Activated naive CD4-positive, alpha-beta T cell treated with anti-CD3 and anti-CD28 coated beads for 36 hours (primary cell): ENCODE measurements at regions of chr2 and their contacts with region 1.

Region 1: DNA sequence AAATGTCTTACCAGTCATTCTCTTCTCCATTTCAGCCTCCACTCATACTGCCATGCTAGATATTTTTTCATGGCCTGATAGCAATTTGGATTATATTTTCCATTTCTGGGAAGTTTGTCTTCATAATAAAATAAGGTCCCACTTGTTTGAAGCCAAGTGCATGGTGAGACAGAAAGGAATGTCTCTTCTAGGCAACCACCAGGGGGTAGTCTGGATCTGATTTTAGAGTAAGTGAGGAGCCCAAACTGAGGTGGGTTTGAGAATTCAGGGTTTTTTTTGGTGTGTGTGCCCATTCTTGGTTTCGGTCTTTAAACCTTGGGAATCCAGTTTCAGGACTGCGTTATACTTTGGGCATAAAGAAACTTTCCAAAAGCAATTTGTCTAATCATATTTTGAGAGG is 315.5 kb downstream of the RPRM start:
- DNase-seq: no peak
- H3K4me3 Mint-ChIP-seq: no peak overlapping the region
- H3K27ac Mint-ChIP-seq: no peak overlapping the region
- H3K4me1 Mint-ChIP-seq: no peaks in the 10 kb centered on the region
- H3K27me3 Mint-ChIP-seq: peaks cover 3% of the 10 kb centered on the region

Region 2: GRCh38 chr2:153043385-153043784 is 119.7 kb before region 1 on chr2:
- CTCF ChIA-PET with region 1: no interaction called
- intact Hi-C with region 1: no loop called
- DNase-seq: no peak
- H3K4me3 Mint-ChIP-seq: no peak overlapping the region
- H3K27ac Mint-ChIP-seq: no peak overlapping the region
- H3K4me1 Mint-ChIP-seq: no peaks in the 10 kb centered on the region
- H3K27me3 Mint-ChIP-seq: peaks cover 3% of the 10 kb centered on the region

Region 3: DNA sequence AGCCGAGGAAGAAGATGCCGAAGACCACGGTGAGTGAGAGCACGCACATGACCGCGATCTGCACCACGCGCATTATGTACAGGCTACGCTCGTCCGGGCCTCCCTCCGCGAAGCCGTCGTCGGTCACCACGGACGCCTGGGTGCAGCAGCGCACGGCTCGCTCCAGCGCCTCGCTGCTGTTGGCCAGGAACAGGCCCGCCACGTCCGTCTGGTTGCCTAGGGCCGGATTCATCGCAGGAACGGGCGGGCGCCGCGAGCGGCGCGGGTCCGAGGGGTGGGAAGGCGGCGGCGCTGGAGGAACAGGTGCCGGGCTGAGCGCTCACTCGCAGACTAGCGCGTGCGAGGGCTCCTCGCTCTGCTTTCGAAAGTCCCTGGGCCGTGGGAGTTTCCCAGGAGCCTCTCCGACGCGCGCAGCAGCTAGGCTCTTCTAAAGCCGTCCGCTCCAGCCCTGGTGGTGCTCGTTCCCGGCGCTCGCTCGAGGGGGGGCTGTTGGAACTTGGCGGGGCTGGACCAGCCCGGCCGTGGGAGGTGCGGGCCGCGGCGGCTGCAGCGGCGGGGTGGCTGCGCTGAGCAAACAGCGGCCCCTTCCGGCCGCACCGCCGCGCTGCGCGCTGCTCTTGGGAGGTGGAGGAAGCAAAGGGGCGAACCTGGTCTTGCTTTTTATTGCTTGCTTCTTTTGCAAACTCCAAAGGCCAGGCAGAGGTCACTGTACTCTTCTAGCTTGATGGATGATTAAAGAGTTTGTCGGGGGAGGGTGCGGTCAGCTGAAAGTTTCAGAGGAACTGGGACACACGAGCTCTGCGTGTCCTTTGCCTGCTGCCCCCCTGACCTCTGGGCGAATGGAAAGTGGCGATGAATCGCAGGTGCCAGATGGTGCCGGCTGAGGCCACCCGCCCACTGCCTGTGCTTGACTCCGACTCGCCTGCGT is 315.5 kb after region 1 on chr2 and contains the start of gene RPRM:
- CTCF ChIA-PET with region 1: no interaction called
- intact Hi-C with region 1: loop called (anchors 1 kb)
- DNase-seq: peak; percentile 55
- H3K4me3 Mint-ChIP-seq: peak within 1 kb of the TSS; percentile 52
- H3K27ac Mint-ChIP-seq: no peak within 1 kb of the TSS
- H3K4me1 Mint-ChIP-seq: peaks cover 15% of the 10 kb centered on the region
- H3K27me3 Mint-ChIP-seq: peaks cover 56% of the 10 kb centered on the region
- total RNA-seq, gene RPRM: not detected

Region 4: GRCh38 chr2:154375579-154375931 is 1212.5 kb after region 1 on chr2:
- CTCF ChIA-PET with region 1: no interaction called
- intact Hi-C with region 1: loop called (anchors 10 kb)
- DNase-seq: no peak
- H3K4me3 Mint-ChIP-seq: no peak overlapping the region
- H3K27ac Mint-ChIP-seq: no peak overlapping the region
- H3K4me1 Mint-ChIP-seq: no peaks in the 10 kb centered on the region
- H3K27me3 Mint-ChIP-seq: no peaks in the 10 kb centered on the region